Activated CD4-positive, alpha-beta T cell treated with anti-CD3 and anti-CD28 coated beads, Interleukin-2, amount 10 ng/mL, durations not matched to agents 7 days and 5 days (primary cell): ENCODE measurements at regions of chr5 and their contacts with region 1.

Region 1: DNA sequence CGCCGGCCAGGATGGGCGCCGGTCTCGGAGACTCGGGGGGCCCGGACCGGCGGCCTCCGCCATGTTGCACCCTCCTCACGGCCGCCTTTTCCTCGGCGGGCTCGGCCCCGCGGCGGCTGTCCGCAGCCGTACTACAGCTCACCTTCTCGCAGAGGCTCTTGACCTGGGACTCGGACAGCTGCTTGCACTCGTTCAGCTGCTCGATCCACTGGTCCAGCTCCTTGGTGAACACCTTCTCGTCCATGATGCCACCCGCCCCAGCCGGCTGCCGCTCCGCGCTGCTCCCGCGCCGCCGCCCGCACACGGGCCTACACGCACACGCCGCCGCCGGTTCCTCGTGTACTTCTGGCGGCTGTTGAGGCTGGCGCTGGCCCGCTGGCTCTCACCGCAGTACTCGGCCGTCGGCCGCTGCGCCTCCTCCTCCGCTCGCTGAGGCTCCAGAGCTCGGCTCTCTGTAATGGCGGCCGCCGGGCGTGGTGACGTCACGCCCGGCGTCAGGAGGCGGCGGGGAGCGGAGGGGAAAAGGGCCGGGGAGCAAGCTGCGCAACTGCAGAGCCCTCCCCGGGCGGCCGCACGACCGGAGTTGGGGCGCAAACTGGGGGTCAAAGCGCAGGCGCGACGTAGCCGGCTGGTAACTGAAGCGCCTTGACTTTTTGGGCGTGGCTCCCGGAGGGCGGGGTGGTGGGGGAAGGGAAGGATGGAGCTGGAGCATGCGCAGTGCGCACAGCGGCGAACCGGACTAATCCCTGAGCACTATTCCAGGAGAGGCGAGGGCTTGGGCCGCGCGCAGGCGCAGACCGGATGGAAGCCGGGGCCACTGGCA is at the start of gene PPP2CA:
- DNase-seq: peak; percentile 99
- H3K4me3 Mint-ChIP-seq: peak within 1 kb of the TSS; percentile 97
- H3K27ac Mint-ChIP-seq: peak within 1 kb of the TSS; percentile 100
- H3K4me1 Mint-ChIP-seq: peaks cover 44% of the 10 kb centered on the region
- H3K27me3 Mint-ChIP-seq: no peaks in the 10 kb centered on the region
- total RNA-seq, gene PPP2CA: 128 to 136 TPM

Region 2: GRCh38 chr5:134138416-134139376 is 87.1 kb before region 1 on chr5:
- CTCF ChIA-PET with region 1: no interaction called
- POLR2A ChIA-PET with region 1: no interaction called
- DNase-seq: no peak
- H3K4me3 Mint-ChIP-seq: no peak overlapping the region
- H3K27ac Mint-ChIP-seq: peak overlapping the region; percentile 59
- H3K4me1 Mint-ChIP-seq: peaks cover 80% of the 10 kb centered on the region
- H3K27me3 Mint-ChIP-seq: no peaks in the 10 kb centered on the region

Region 3: DNA sequence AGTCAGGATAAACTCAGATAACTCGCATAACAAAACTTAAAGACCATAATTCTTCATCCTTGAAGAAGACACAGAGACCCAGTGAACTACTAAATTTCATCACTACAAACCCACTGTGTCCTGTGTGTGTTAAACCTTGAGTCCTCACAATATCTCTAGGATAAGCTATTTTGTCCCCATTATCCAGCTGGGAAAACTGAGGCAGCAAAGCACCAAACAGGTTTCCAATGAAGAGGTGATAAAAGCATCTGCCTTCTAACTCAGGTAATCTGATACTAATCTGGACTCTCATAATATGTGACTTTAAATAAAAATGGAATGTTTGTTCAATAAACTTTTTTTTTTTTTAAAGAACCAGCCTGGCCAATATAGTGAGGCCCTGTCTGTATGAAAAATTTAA is 62.8 kb after region 1 on chr5:
- CTCF ChIA-PET with region 1: interaction called, 4 read pairs
- POLR2A ChIA-PET with region 1: interaction called, 11 read pairs
- DNase-seq: no peak
- H3K4me3 Mint-ChIP-seq: no peak overlapping the region
- H3K27ac Mint-ChIP-seq: no peak overlapping the region
- H3K4me1 Mint-ChIP-seq: peaks cover 4% of the 10 kb centered on the region
- H3K27me3 Mint-ChIP-seq: peaks cover 11% of the 10 kb centered on the region

Region 4: DNA sequence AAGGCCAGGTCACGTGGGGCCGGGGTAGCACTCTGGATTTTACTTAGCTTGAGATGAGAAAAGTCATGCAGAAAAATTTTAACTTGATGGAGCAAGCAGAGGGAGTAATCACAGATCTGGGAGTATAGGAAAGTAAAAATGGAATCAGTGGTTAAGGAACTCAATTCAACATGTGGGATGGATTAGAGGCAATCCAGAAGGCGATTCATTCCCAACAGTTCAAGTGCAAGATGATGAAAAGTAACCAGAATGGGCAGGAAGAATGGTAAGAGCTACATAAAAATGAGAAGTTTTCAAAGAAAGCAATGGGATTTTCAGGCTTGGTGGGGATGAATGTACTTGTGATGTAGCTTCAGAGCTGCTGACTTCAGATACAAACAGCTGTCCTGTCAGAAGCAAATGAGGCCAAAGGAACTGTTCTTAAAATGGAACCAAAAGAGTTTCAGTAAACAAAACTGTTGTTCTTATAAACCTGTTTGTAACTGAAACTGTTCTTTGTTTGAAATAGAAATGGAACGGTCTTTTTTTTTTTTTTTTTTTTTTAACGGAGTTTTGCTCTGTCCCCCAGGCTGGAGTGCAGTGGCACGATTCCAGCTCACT is 417.2 kb after region 1 on chr5:
- CTCF ChIA-PET with region 1: no interaction called
- POLR2A ChIA-PET with region 1: no interaction called
- DNase-seq: no peak
- H3K4me3 Mint-ChIP-seq: no peak overlapping the region
- H3K27ac Mint-ChIP-seq: no peak overlapping the region
- H3K4me1 Mint-ChIP-seq: peaks cover 13% of the 10 kb centered on the region
- H3K27me3 Mint-ChIP-seq: no peaks in the 10 kb centered on the region